Esophagus muscularis mucosa (tissue), 4 donors: ENCODE measurements at regions of chr17 and their contacts with region 1.

Region 1: GRCh38 chr17:37744961-37745800 is at the start of gene HNF1B:
- DNase-seq: no peak
- H3K4me3 ChIP-seq: peak within 1 kb of the TSS in 3 of 4 donors; percentile 34 to 52 (median 44)
- H3K27ac ChIP-seq: no peak within 1 kb of the TSS
- H3K4me1 ChIP-seq: peaks cover 32 to 43% (median 39%) of the 10 kb centered on the region in 4 donors
- H3K27me3 ChIP-seq: peaks cover 10 to 89% (median 56%) of the 10 kb centered on the region in 4 donors
- CTCF ChIP-seq: no peak
- EP300 ChIP-seq: no peak
- POLR2A ChIP-seq: no peak
- total RNA-seq, gene HNF1B: not detected

Region 2: GRCh38 chr17:37643118-37643766 is 101.9 kb before region 1 on chr17 and contains the start of gene DDX52:
- intact Hi-C with region 1: loop called (anchors 10 kb)
- DNase-seq: peak; percentile 97
- H3K4me3 ChIP-seq: peak within 1 kb of the TSS; percentile 66 to 93 (median 78)
- H3K27ac ChIP-seq: peak within 1 kb of the TSS; percentile 87 to 92 (median 89)
- H3K4me1 ChIP-seq: peaks cover 18 to 49% (median 42%) of the 10 kb centered on the region in 4 donors
- H3K27me3 ChIP-seq: peaks cover 0 to 14% (median 0%) of the 10 kb centered on the region in 4 donors
- CTCF ChIP-seq: no peak
- EP300 ChIP-seq: no peak
- POLR2A ChIP-seq: no peak
- total RNA-seq, gene DDX52: 13.1 to 17.9 (median 14.1) TPM

Region 3: GRCh38 chr17:37802712-37803416 is 57.7 kb after region 1 on chr17:
- intact Hi-C with region 1: no loop called
- DNase-seq: no peak
- H3K4me3 ChIP-seq: no peak overlapping the region
- H3K27ac ChIP-seq: no peak overlapping the region
- H3K4me1 ChIP-seq: peaks cover 0 to 2% (median 0%) of the 10 kb centered on the region in 4 donors
- H3K27me3 ChIP-seq: peaks cover 0 to 8% (median 0%) of the 10 kb centered on the region in 4 donors
- CTCF ChIP-seq: no peak
- EP300 ChIP-seq: no peak
- POLR2A ChIP-seq: no peak

Region 4: DNA sequence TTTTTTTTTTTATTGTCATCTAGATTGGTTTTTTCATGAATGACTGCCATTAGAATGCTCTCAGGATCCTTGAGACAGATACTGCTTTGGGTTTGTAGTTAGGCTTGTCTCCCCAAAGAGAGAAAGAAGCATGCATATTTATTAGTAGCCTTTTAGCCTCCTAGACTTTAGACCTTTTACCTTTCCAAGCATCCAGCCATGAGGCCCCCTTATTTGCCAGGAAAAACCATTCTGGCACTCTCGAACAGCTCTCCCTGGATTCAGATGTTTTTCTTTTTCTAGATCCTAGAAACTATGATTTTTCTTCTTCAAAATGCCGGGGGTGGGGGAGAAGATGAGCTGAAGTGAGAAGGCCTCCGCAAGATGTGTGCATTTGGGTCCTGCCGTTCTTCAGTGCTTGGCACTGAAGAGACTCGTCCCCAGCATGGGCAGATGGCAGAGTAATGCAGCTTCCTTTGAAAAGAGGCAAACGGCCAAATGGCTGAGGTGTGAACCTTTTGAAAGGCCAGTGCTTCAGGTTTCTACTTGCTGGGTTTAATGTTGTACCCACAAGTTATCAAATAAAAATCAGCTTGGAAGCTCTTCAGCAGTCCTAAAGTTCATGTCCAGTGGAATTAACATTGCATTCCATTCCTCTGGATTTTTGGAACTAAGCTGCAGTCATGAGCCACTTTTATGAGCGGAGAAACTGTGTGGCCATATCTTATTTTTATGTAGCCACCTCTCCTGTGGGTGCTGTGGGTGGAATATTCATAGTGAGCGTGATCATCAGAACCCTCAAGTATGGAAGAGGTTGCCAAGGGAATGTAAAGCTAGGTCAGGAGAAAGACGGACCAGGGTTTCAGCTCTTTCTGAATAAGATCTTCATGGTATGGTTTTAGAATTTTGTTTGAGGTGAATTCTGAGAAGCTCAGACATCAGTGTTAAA is 613.7 kb after region 1 on chr17:
- intact Hi-C with region 1: no loop called
- DNase-seq: no peak
- H3K4me3 ChIP-seq: no peak overlapping the region
- H3K27ac ChIP-seq: peak overlapping the region in 3 of 4 donors; percentile 21 to 28 (median 22)
- H3K4me1 ChIP-seq: peaks cover 42 to 60% (median 57%) of the 10 kb centered on the region in 4 donors
- H3K27me3 ChIP-seq: no peaks in the 10 kb centered on the region
- CTCF ChIP-seq: no peak
- EP300 ChIP-seq: no peak
- POLR2A ChIP-seq: no peak